Natural killer cell (primary cell): ENCODE measurements at regions of chr7 and their contacts with region 1.

Region 1: GRCh38 chr7:150404805-150405583 is 25.9 kb downstream of the ZNF775 start:
- DNase-seq: peak; percentile 74 to 90
- ATAC-seq: peak; percentile 84 to 90 (median 88)
- H3K4me3 ChIP-seq: peak overlapping the region; percentile 87
- H3K4me3 Mint-ChIP-seq: peak overlapping the region; percentile 94
- H3K27ac ChIP-seq: peak overlapping the region; percentile 99
- H3K27ac Mint-ChIP-seq: peak overlapping the region; percentile 90 to 91
- H3K4me1 ChIP-seq: peaks cover 43% of the 10 kb centered on the region
- H3K4me1 Mint-ChIP-seq: peaks cover 34 to 37% of the 10 kb centered on the region in 2 donors
- H3K27me3 ChIP-seq: no peaks in the 10 kb centered on the region
- H3K27me3 Mint-ChIP-seq: no peaks in the 10 kb centered on the region
- CTCF ChIP-seq: peak; percentile 23

Region 2: GRCh38 chr7:150368096-150368883 is 36.7 kb before region 1 on chr7 and contains the start of gene REPIN1:
- intact Hi-C with region 1: loop called (anchors 2 kb)
- DNase-seq: peak; percentile 77 to 85
- ATAC-seq: peak; percentile 72 to 81 (median 76)
- H3K4me3 ChIP-seq: peak within 1 kb of the TSS; percentile 99
- H3K4me3 Mint-ChIP-seq: peak within 1 kb of the TSS; percentile 96
- H3K27ac ChIP-seq: peak within 1 kb of the TSS; percentile 87
- H3K27ac Mint-ChIP-seq: peak within 1 kb of the TSS; percentile 80 to 85
- H3K4me1 ChIP-seq: peaks cover 47% of the 10 kb centered on the region
- H3K4me1 Mint-ChIP-seq: peaks cover 13 to 35% of the 10 kb centered on the region in 2 donors
- H3K27me3 ChIP-seq: no peaks in the 10 kb centered on the region
- H3K27me3 Mint-ChIP-seq: no peaks in the 10 kb centered on the region
- CTCF ChIP-seq: no peak
- total RNA-seq, gene REPIN1: 58.9 to 79.4 (median 76.5) TPM